A549 (cell line): ENCODE measurements at regions of chr3 and their contacts with region 1.

Region 1: DNA sequence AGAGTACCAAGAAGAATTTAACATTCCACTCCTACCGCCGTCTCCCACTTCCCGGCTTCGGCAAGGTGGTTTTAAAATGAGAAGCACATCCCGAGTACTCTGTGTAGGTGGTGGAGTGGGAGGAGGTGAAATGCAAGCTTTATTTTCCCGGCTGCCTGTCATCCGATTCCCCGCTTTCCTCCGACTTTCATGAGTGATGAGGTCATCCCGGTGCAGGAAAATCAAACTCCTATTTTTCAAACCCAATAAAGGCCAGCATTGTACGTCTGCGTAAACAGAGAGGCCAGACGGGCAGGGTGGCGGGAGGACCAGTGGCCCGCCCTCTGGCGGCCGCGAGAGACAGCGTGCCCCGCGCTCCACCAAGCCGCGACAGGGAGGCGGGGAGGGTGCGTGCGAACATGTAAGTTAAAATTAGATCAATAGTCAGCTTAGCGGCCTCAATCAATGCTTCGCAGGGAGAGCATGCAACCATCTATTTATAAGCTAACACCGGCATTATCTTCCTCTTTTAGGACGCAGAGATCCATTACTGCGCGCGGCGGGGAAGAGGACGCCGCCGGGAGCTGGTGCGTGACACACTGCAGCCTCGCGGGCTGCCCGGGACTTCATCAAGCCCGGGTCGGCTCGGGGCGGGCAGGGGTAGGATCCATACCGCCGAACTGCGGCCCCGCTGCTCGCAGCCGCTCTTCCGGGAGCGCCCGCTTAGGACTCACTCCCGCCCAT is 163.3 kb downstream of the CD47 start:
- DNase-seq: peak; percentile 62 to 82
- ATAC-seq: peak; percentile 99
- H3K4me3 ChIP-seq: peak overlapping the region; percentile 61
- H3K27ac ChIP-seq: peak overlapping the region; percentile 41 to 58; a peak in 5 of 6 replicates
- H3K4me1 ChIP-seq: no peaks in the 10 kb centered on the region
- CTCF ChIP-seq: peak; percentile 90
- EP300 ChIP-seq: no peak
- POLR2A ChIP-seq: no peak
- RAD21 ChIP-seq: peak; percentile 63 to 79

Region 2: DNA sequence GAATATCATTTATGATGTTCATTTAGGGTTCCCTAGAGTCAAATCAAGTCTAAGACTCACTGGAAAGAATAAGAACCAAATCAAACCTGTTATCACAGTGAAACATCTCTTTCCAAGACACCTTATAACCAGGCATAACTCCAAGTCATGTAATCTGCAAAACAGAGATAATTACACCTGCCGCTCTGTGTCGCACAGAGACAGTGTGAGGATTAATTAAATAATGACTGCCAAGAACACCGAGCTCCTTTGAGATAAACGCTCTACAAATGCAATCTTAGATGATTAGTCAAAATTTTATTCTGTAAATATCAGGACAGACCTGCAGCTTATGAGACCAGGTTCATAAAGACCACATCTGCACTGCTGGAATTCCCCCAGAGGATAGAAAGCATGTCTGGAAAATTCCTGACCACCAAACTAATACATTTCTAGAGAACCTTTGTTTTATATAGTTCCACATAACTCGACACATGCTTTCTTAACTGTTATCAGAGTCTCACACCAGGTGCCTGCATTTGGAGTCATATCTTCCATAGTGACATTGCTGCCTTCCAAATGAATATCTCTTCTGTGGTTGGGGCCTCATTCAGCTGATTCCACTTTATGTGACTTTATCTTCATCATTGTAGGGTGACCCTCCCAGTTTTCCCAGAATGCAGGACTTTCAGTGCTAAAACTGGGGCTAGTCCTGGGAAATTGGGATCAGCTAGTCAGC is 89.5 kb before region 1 on chr3:
- CTCF ChIA-PET with region 1: no interaction called
- POLR2A ChIA-PET with region 1: no interaction called
- DNase-seq: no peak
- ATAC-seq: no peak
- H3K4me3 ChIP-seq: no peak overlapping the region
- H3K27ac ChIP-seq: no peak overlapping the region
- H3K4me1 ChIP-seq: no peaks in the 10 kb centered on the region
- CTCF ChIP-seq: no peak
- EP300 ChIP-seq: no peak
- POLR2A ChIP-seq: no peak
- RAD21 ChIP-seq: no peak

Region 3: DNA sequence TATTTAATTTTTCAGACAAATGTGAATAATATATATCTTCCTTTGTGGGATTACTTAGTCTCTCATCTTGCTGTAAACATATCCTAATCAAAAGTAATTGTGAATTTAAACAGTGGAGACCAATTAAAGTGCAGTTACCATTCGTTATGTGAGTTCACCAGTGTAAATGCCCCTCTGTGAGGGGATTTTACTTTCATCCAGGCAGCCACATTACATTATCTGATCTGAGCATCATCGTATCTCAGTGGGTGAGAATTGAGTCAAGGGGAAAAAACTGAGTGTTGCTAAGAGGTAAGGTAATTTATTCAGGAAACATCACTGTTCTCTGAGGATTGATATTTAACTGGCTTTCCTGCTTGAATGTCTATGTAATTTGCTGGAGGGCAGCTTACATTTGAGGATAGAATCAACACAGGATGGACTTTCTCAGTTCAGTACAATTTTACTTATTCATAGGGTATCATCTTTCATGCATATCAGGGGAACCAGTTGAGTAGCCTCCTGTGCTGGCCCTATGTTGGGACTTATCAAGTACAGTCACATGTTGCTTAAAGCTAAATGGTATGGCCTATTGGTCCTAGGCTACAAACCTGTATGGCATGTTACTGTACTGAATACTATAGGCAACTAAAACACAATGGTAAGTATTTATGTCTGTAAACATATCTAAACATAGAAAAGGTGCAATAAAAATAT is 56.4 kb before region 1 on chr3:
- CTCF ChIA-PET with region 1: interaction called, 12 read pairs
- POLR2A ChIA-PET with region 1: no interaction called
- DNase-seq: no peak
- ATAC-seq: no peak
- H3K4me3 ChIP-seq: no peak overlapping the region
- H3K27ac ChIP-seq: no peak overlapping the region
- H3K4me1 ChIP-seq: peaks cover 12% of the 10 kb centered on the region
- CTCF ChIP-seq: no peak
- EP300 ChIP-seq: no peak
- POLR2A ChIP-seq: no peak
- RAD21 ChIP-seq: no peak

Region 4: DNA sequence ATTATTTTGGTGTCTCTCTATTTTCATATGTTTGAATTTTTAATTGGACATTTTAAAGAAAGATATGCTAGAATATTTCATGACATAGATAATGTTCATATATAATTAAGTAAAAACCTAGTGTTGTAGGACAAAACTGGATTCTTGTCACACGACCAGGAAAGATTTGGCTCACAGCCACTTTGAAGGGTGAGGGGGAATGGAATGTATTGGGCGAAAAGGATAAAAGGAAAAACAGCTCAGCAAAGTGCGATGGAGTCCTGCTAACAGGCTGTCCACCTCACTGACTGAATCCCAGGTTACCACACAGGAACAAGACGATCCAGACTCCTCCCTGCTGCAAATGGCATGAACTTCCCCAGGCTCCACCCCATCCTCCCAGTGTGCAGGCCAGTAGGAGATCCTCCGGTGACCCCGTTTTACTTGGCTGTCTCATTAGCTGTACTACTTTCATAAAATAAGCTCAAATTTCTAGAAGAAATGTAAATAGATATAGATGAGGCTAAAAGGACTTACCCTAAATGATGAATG is 22.9 kb before region 1 on chr3:
- CTCF ChIA-PET with region 1: interaction called, 14 read pairs
- POLR2A ChIA-PET with region 1: no interaction called
- DNase-seq: no peak
- ATAC-seq: no peak
- H3K4me3 ChIP-seq: no peak overlapping the region
- H3K27ac ChIP-seq: no peak overlapping the region
- H3K4me1 ChIP-seq: no peaks in the 10 kb centered on the region
- CTCF ChIP-seq: no peak
- EP300 ChIP-seq: no peak
- POLR2A ChIP-seq: no peak
- RAD21 ChIP-seq: no peak

Region 5: DNA sequence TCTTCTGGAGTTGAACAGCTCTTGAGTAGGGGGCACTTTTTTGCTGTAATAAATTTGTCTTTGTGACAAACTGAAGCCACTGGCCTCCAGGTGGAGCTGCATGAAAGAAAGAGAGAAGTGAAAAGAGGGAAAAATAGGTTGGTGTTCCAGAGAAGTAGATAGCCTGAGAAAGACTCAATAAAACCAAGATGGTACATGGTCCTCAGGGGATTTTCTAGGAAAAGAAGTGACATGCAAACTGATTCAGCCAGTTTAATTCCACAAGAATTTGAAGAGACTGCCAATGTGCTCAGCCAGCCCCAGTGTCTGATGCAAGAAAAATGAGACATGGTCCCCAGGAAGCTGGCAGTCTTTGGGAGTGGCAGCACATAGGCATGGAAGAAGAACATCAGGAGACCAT is 10.6 kb after region 1 on chr3:
- CTCF ChIA-PET with region 1: interaction called, 23 read pairs
- POLR2A ChIA-PET with region 1: no interaction called
- DNase-seq: peak in 1 of 2 experiments; percentile 29
- ATAC-seq: no peak; a peak in 2 of 6 replicates
- H3K4me3 ChIP-seq: no peak overlapping the region
- H3K27ac ChIP-seq: no peak overlapping the region
- H3K4me1 ChIP-seq: no peaks in the 10 kb centered on the region
- CTCF ChIP-seq: peak; percentile 49
- EP300 ChIP-seq: no peak
- POLR2A ChIP-seq: no peak
- RAD21 ChIP-seq: peak; percentile 66 to 68

Region 6: GRCh38 chr3:107962946-107963345 is 35.4 kb after region 1 on chr3:
- CTCF ChIA-PET with region 1: interaction called, 10 read pairs
- POLR2A ChIA-PET with region 1: no interaction called
- DNase-seq: peak; percentile 13 to 35
- ATAC-seq: peak; percentile 58 to 79; a peak in 3 of 6 replicates
- H3K4me3 ChIP-seq: no peak overlapping the region
- H3K27ac ChIP-seq: 0 out of 6 replicates have a peak overlapping the region, but pooled peaks of 1 of the 2 experiments have one; percentile 5
- H3K4me1 ChIP-seq: peaks cover 11% of the 10 kb centered on the region
- CTCF ChIP-seq: no peak
- EP300 ChIP-seq: no peak
- POLR2A ChIP-seq: no peak
- RAD21 ChIP-seq: no peak

Region 7: DNA sequence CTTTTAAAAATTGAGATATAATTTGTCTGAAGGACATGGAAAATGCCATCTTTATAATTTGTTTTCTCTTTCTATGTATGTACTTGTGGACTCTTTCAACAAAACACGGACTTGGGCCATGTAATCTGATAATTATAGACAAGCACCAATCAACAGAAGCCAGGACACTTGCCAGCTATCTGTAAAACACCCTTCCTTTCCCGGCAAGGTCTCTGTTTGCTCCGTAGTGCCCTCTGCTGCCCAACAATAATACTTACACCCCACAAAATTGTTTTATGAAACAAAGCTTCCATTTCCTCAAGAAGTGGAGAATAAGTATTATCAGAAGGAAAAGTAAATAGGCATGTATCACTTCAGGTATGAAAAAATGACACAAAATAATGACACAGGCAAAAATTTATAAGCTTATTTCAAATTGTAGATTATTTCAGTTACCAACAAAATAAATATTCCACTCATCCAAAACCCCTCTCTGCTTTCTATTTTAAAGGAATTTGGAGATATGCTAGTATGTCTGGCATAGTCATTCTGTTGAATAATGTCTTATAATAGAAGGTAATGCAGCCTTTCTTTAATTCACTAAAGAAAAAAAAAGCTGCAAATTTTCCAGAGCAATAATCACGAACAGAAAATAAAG is 550.1 kb after region 1 on chr3:
- CTCF ChIA-PET with region 1: interaction called, 11 read pairs
- POLR2A ChIA-PET with region 1: no interaction called
- DNase-seq: peak; percentile 13 to 72
- ATAC-seq: peak; percentile 52 to 75; a peak in 3 of 6 replicates
- H3K4me3 ChIP-seq: no peak overlapping the region
- H3K27ac ChIP-seq: no peak overlapping the region
- H3K4me1 ChIP-seq: peaks cover 12% of the 10 kb centered on the region
- CTCF ChIP-seq: peak; percentile 82
- EP300 ChIP-seq: no peak
- POLR2A ChIP-seq: no peak
- RAD21 ChIP-seq: peak; percentile 70 to 75